ENCODE measurements at regions of chr2 and their contacts with region 1.

Region 1: GRCh38 chr2:64144057-64145013 is at the start of gene PELI1:
- DNase-seq: peak; percentile 95 to 98 (median 97)
- ATAC-seq: peak; percentile 97
- H3K4me3 ChIP-seq: peak within 1 kb of the TSS; percentile 69 to 90
- H3K27ac ChIP-seq: peak within 1 kb of the TSS; percentile 81 to 99 (median 94)
- H3K4me1 ChIP-seq: peaks cover 12% of the 10 kb centered on the region
- H3K27me3 ChIP-seq: no peaks in the 10 kb centered on the region
- CTCF ChIP-seq: peak in 4 of 7 experiments; percentile 32 to 41 (median 36)
- POLR2A ChIP-seq: peak; percentile 94 to 98 (median 96)
- total RNA-seq, gene PELI1: 6.3 to 16.6 TPM

Region 2: DNA sequence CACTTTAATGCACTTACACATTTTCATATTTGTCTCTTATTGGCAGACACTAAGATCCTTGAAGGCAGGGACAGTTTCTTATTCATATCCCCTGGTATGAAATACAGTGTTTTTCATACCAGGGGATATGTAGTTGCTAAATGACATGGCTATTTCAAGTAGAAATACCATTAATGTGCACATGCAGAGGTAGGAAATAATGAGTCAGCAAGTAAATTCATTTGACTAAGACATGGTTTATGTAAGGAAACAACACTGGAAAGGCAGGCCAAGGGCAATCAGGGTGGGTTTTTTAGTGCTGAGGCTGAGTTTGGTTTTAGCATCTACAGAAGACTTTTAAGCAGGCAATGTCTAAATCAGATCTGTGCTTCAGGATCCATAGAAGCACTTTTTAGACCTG is 712.0 kb before region 1 on chr2:
- intact Hi-C with region 1: no loop called
- DNase-seq: no peak
- ATAC-seq: no peak
- H3K4me3 ChIP-seq: no peak overlapping the region
- H3K27ac ChIP-seq: no peak overlapping the region
- H3K4me1 ChIP-seq: peaks cover 4% of the 10 kb centered on the region
- H3K27me3 ChIP-seq: no peaks in the 10 kb centered on the region
- CTCF ChIP-seq: no peak
- POLR2A ChIP-seq: no peak

Region 3: DNA sequence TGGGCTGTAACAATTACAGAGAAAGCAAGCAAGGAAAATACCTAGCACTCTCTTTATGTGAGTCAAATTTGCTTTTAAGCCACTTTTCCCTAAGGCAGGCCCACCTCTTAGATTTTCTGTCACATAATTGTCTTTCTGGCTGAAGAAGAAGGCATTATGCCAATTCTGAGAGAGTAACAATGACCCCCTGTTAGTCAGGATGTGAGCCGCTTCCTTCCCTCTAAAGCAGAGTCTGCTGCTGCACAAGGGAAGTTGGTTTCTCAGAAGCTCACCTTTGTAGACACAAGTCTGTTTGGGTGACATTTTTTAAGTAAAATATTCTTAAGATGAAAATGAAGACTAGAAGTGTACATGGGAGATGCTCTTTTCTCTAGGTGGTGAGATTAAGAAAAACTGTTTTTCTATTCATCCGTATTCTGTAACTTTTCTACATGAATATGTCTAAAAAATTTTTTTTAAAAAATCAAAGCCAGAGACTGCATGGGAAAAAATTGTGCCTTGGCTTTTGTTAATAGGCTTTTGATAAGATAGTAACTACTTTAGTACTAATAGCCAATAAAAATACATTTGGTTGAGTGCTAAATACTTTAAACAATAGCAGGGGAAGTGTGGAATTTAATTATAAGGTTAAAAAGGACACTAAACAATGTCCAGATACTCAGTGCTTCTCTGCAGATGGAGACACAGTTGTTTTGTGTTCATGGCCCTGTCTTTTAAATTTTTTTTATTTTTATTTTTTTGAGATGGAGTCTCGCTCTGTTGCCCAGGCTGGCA is 91.7 kb before region 1 on chr2:
- intact Hi-C with region 1: loop called (anchors 10 kb)
- DNase-seq: no peak
- ATAC-seq: no peak
- H3K4me3 ChIP-seq: no peak overlapping the region
- H3K27ac ChIP-seq: no peak overlapping the region
- H3K4me1 ChIP-seq: peaks cover 6% of the 10 kb centered on the region
- H3K27me3 ChIP-seq: no peaks in the 10 kb centered on the region
- CTCF ChIP-seq: no peak
- POLR2A ChIP-seq: no peak

Measured in body of pancreas (tissue), 4 donors.